ENCODE measurements at regions of chr16 and their contacts with region 1.

Region 1: DNA sequence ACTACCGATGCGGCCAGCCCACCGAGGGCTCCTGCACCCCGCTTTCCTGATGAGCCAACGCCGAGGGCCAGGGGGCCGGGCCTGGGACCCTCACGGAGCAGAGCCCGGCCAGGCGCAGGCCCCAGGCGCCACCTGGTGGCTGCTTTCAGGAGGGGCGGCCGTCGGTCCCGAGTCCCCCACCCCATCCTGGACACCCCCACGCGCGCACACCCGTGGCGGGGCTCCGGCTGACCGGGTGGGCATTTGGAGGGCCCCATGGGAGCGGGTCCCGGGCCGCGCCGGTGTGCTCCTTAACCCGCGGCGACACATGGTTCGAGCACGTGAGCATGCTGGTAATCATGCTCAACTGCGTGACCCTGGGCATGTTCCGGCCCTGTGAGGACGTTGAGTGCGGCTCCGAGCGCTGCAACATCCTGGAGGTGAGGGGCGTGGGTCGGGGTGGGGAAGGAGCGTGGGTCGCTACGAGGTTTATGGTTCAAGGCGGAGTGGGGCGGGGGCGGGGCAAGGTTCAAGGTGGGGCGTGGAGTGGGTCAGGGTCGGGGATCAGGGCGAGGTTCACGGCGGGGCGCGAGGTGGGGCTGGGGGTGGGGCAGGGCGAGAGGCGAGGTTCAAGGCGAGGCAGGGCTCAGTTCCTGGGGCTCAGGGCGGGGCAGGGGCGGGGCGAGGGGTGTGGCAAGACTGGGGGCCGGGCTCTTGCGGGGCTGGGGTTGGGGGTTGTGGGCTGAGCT is 30.2 kb downstream of the TPSG1 start:
- DNase-seq: no peak
- H3K4me3 ChIP-seq: no peak overlapping the region
- H3K27ac ChIP-seq: peak overlapping the region in 3 of 4 donors; percentile 34 to 75 (median 42)
- H3K4me1 ChIP-seq: peaks cover 0 to 16% (median 6%) of the 10 kb centered on the region in 4 donors
- H3K27me3 ChIP-seq: no peaks in the 10 kb centered on the region
- CTCF ChIP-seq: peak; percentile 54 to 71 (median 70)
- EP300 ChIP-seq: no peak
- POLR2A ChIP-seq: no peak

Region 2: GRCh38 chr16:1149101-1149636 is 45.7 kb before region 1 on chr16:
- in situ Hi-C with region 1: no loop called
- intact Hi-C with region 1: loop called (anchors 2 kb)
- DNase-seq: no peak
- H3K4me3 ChIP-seq: no peak overlapping the region
- H3K27ac ChIP-seq: peak overlapping the region in 3 of 4 donors; percentile 41 to 79 (median 45)
- H3K4me1 ChIP-seq: peaks cover 0 to 11% (median 9%) of the 10 kb centered on the region in 4 donors
- H3K27me3 ChIP-seq: peaks cover 27% of the 10 kb centered on the region
- CTCF ChIP-seq: no peak
- EP300 ChIP-seq: no peak
- POLR2A ChIP-seq: no peak

Region 3: DNA sequence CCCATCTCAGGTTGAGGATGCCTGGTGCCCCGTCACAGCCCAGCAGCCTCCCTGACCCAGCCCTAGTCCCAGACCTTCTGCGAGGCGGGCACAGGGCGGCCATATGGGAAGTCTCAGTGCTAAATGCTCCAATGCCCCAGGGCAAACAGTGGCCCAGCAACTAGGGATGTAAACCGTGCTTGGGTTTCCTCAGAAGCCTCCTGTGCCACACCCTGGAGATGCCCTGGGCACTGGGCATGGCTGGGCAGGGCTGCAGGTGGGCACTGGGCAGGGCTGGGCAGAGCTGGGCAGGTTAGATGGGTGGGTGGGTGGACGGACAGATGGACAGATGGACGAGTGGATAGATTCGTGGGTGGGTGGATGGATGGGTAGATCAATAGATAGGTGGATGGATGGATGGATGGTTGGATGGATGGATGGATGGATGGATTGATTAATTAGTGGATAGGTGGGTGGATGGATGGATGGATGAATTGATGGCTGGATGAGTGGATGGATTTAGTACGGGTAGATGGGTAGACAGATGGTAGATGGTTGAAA is 77.8 kb after region 1 on chr16:
- in situ Hi-C with region 1: no loop called
- intact Hi-C with region 1: no loop called
- DNase-seq: no peak
- H3K4me3 ChIP-seq: no peak overlapping the region
- H3K27ac ChIP-seq: no peak overlapping the region
- H3K4me1 ChIP-seq: peaks cover 0 to 10% (median 6%) of the 10 kb centered on the region in 4 donors
- H3K27me3 ChIP-seq: peaks cover 20% of the 10 kb centered on the region
- CTCF ChIP-seq: no peak
- EP300 ChIP-seq: no peak
- POLR2A ChIP-seq: no peak

Measured in transverse colon (tissue), 4 donors.